Esophagus muscularis mucosa (tissue), 4 donors: ENCODE measurements at regions of chr12 and their contacts with region 1.

Region 1: GRCh38 chr12:124720004-124720680 is 143.5 kb downstream of the SCARB1 start:
- DNase-seq: no peak
- H3K4me3 ChIP-seq: no peak overlapping the region
- H3K27ac ChIP-seq: peak overlapping the region; percentile 82 to 88 (median 87)
- H3K4me1 ChIP-seq: peaks cover 20 to 39% (median 29%) of the 10 kb centered on the region in 4 donors
- H3K27me3 ChIP-seq: no peaks in the 10 kb centered on the region
- CTCF ChIP-seq: peak; percentile 38 to 54 (median 54)
- EP300 ChIP-seq: no peak
- POLR2A ChIP-seq: no peak

Region 2: GRCh38 chr12:123696646-123697045 is 1023.5 kb before region 1 on chr12:
- intact Hi-C with region 1: no loop called
- DNase-seq: no peak
- H3K4me3 ChIP-seq: no peak overlapping the region
- H3K27ac ChIP-seq: no peak overlapping the region
- H3K4me1 ChIP-seq: no peaks in the 10 kb centered on the region
- H3K27me3 ChIP-seq: no peaks in the 10 kb centered on the region
- CTCF ChIP-seq: no peak
- EP300 ChIP-seq: no peak
- POLR2A ChIP-seq: no peak

Region 3: GRCh38 chr12:124655698-124656516 is 64.2 kb before region 1 on chr12:
- intact Hi-C with region 1: loop called (anchors 5 kb)
- DNase-seq: peak; percentile 95
- H3K4me3 ChIP-seq: peak overlapping the region; percentile 27 to 45 (median 36)
- H3K27ac ChIP-seq: peak overlapping the region; percentile 81 to 87 (median 86)
- H3K4me1 ChIP-seq: peaks cover 26 to 57% (median 46%) of the 10 kb centered on the region in 4 donors
- H3K27me3 ChIP-seq: no peaks in the 10 kb centered on the region
- CTCF ChIP-seq: no peak
- EP300 ChIP-seq: no peak
- POLR2A ChIP-seq: no peak

Region 4: GRCh38 chr12:124869034-124869665 is 149.0 kb after region 1 on chr12:
- intact Hi-C with region 1: no loop called
- DNase-seq: no peak
- H3K4me3 ChIP-seq: no peak overlapping the region
- H3K27ac ChIP-seq: peak overlapping the region in 3 of 4 donors; percentile 46 to 53 (median 46)
- H3K4me1 ChIP-seq: peaks cover 1 to 5% (median 3%) of the 10 kb centered on the region in 4 donors
- H3K27me3 ChIP-seq: no peaks in the 10 kb centered on the region
- CTCF ChIP-seq: no peak
- EP300 ChIP-seq: no peak
- POLR2A ChIP-seq: no peak